ENCODE measurements at regions of chr20 and their contacts with region 1.

Region 1: GRCh38 chr20:25390538-25391528 is at the start of gene ABHD12:
- DNase-seq: peak; percentile 85
- ATAC-seq: peak; percentile 93
- H3K4me3 Mint-ChIP-seq: peak within 1 kb of the TSS; percentile 85
- H3K27ac Mint-ChIP-seq: peak within 1 kb of the TSS; percentile 76
- H3K4me1 Mint-ChIP-seq: peaks cover 17% of the 10 kb centered on the region
- H3K27me3 Mint-ChIP-seq: no peaks in the 10 kb centered on the region
- CTCF ChIP-seq: no peak
- total RNA-seq, gene ABHD12: 16.1 and 16.3 TPM in 2 replicates

Region 2: DNA sequence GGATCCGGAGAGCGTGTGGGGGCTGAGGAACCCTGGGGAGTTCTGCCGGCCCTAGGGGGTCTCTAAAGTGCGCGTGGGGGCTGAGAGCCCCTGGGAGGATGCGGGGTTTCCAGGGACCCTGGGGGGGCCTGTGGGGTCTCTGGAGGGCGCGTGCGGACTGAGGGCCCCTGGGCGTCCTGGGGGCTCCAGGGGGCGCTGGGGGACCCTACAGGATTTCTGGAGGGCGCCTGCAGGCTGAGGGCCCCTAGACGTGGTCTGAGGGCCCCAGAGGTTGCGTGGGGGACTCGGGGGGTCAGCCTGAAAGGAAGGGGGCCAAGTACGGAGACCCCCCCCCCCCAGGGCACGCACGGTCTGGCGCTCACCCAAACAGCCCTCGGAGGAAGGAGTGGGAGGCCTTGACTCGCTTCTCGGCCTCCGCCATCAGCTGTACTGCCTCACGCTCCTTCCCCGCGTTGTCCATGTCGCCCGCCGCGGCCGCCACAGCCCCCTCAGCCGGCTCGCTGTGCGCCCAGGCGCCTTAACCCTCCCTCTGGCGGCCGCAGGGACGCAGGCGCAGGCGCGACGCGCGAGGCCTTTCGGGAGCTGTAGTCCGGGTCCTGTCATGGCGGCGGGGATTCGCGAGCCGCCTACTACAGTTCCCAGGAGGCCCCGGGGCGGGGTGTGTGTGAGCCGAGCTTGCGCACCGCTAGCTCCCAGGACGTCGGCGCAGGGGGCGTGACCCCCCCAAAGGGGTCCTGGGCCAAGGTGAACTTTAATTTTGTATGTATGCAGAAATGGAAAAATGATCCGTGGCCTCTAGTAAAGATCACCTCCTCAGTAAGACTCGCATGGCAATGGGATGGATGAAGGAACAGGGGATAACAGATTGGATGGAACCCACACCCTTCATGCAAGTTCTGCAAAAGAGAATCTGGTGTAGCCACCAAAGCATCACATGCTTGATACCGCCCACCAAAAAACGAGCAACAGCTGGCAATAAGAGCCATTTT is 1969.6 kb before region 1 on chr20 and contains the start of gene NAPB:
- CTCF ChIA-PET with region 1: no interaction called
- POLR2A ChIA-PET with region 1: no interaction called
- intact Hi-C with region 1: loop called (anchors 5 kb)
- DNase-seq: peak; percentile 92
- ATAC-seq: peak; percentile 99
- H3K4me3 Mint-ChIP-seq: peak within 1 kb of the TSS; percentile 82
- H3K27ac Mint-ChIP-seq: peak within 1 kb of the TSS; percentile 50
- H3K4me1 Mint-ChIP-seq: peaks cover 17% of the 10 kb centered on the region
- H3K27me3 Mint-ChIP-seq: peaks cover 13% of the 10 kb centered on the region
- CTCF ChIP-seq: no peak
- total RNA-seq, gene NAPB: 5.3 and 7.8 TPM in 2 replicates

Region 3: GRCh38 chr20:24910461-24910860 is 480.4 kb before region 1 on chr20:
- CTCF ChIA-PET with region 1: no interaction called
- POLR2A ChIA-PET with region 1: no interaction called
- intact Hi-C with region 1: no loop called
- DNase-seq: no peak
- ATAC-seq: no peak
- H3K4me3 Mint-ChIP-seq: no peak overlapping the region
- H3K27ac Mint-ChIP-seq: no peak overlapping the region
- H3K4me1 Mint-ChIP-seq: no peaks in the 10 kb centered on the region
- H3K27me3 Mint-ChIP-seq: no peaks in the 10 kb centered on the region
- CTCF ChIP-seq: no peak

Region 4: DNA sequence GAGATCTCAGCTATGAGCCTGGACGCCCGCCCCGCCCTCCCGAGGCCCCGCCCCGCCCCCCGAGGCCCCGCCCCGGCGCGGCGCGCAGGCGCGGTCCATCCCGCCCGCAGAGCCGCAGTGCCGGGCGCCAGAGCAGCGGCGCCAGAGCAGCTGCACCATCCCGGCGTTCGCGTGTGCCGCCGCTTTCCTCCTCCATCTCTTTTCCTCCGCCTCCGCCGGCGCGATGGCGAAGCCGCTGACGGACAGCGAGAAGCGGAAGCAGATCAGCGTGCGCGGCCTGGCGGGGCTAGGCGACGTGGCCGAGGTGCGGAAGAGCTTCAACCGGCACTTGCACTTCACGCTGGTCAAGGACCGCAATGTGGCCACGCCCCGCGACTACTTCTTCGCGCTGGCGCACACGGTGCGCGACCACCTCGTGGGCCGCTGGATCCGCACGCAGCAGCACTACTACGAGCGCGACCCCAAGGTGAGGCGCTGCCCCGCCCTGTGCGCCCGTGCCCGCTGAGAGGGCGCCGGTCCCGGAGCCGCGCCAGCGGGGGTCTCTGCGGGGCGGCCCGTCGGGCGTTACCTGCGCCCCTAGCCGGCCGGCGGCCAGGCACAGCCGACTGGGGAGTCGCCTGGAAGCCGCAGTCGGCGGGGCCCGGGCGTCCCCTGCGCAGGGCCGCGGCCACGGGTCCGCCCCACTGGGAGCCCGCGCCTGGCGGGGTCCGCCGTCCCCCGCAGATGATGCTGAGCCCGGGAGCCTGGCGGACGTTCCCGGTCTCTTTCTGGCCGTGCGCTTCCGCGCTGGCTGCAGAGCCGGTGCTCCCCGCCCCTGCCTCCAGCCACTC is 142.7 kb before region 1 on chr20 and contains the start of gene PYGB:
- CTCF ChIA-PET with region 1: no interaction called
- POLR2A ChIA-PET with region 1: interaction called, 11 read pairs
- intact Hi-C with region 1: loop called (anchors 1 kb)
- DNase-seq: peak; percentile 77
- ATAC-seq: peak; percentile 87
- H3K4me3 Mint-ChIP-seq: peak within 1 kb of the TSS; percentile 94
- H3K27ac Mint-ChIP-seq: peak within 1 kb of the TSS; percentile 86
- H3K4me1 Mint-ChIP-seq: peaks cover 25% of the 10 kb centered on the region
- H3K27me3 Mint-ChIP-seq: peaks cover 10% of the 10 kb centered on the region
- CTCF ChIP-seq: no peak
- total RNA-seq, gene PYGB: 21.5 and 23.5 TPM in 2 replicates

Region 5: GRCh38 chr20:25259788-25260254 is 131.0 kb before region 1 on chr20:
- CTCF ChIA-PET with region 1: no interaction called
- POLR2A ChIA-PET with region 1: no interaction called
- intact Hi-C with region 1: no loop called
- DNase-seq: no peak
- ATAC-seq: no peak
- H3K4me3 Mint-ChIP-seq: no peak overlapping the region
- H3K27ac Mint-ChIP-seq: no peak overlapping the region
- H3K4me1 Mint-ChIP-seq: no peaks in the 10 kb centered on the region
- H3K27me3 Mint-ChIP-seq: no peaks in the 10 kb centered on the region
- CTCF ChIP-seq: no peak

Region 6: DNA sequence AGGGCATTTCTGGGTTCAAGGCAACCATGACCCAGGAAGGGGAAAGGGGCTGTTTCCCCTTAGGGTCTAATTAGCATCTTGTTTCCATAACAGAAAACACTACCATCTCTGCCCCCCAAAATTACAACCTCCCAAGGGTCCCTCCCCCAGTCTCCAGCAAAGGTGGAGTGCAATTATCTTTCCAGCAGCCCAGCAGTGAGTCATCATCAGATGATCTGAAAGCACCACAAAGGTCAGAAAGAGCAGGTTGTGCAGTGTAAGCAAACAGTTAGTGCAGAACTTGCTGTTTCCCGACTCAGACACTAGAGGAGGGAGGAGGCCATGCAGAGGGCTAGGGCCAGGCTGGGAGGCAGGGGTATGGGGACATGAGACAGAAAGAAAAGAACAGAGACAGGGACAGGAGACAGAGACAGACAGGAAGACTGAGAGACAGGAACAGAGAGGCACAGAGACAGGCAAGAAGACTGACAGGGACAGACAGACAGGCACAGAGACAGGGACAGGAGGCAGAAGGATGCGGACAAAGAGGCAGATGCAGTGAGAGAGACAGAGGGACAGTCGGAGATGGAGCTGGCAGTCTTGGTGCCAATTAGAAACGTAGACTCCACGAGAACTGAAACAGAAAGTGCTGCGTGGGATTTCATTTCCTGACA is 80.4 kb before region 1 on chr20:
- CTCF ChIA-PET with region 1: no interaction called
- POLR2A ChIA-PET with region 1: interaction called, 4 read pairs
- intact Hi-C with region 1: loop called (anchors 1 kb)
- DNase-seq: no peak
- ATAC-seq: peak; percentile 94
- H3K4me3 Mint-ChIP-seq: peak overlapping the region; percentile 16
- H3K27ac Mint-ChIP-seq: peak overlapping the region; percentile 57
- H3K4me1 Mint-ChIP-seq: peaks cover 33% of the 10 kb centered on the region
- H3K27me3 Mint-ChIP-seq: no peaks in the 10 kb centered on the region
- CTCF ChIP-seq: no peak

Region 7: GRCh38 chr20:25407311-25408169 is 16.7 kb after region 1 on chr20 and contains the start of gene GINS1:
- CTCF ChIA-PET with region 1: no interaction called
- POLR2A ChIA-PET with region 1: interaction called, 13 read pairs
- intact Hi-C with region 1: loop called (anchors 1 kb)
- DNase-seq: peak; percentile 70
- ATAC-seq: peak; percentile 93
- H3K4me3 Mint-ChIP-seq: peak within 1 kb of the TSS; percentile 91
- H3K27ac Mint-ChIP-seq: peak within 1 kb of the TSS; percentile 76
- H3K4me1 Mint-ChIP-seq: peaks cover 17% of the 10 kb centered on the region
- H3K27me3 Mint-ChIP-seq: no peaks in the 10 kb centered on the region
- CTCF ChIP-seq: no peak
- total RNA-seq, gene GINS1: 2.9 and 5.4 TPM in 2 replicates

Region 8: GRCh38 chr20:25592135-25592852 is 201.5 kb after region 1 on chr20:
- CTCF ChIA-PET with region 1: no interaction called
- POLR2A ChIA-PET with region 1: no interaction called
- intact Hi-C with region 1: no loop called
- DNase-seq: no peak
- ATAC-seq: no peak
- H3K4me3 Mint-ChIP-seq: no peak overlapping the region
- H3K27ac Mint-ChIP-seq: no peak overlapping the region
- H3K4me1 Mint-ChIP-seq: no peaks in the 10 kb centered on the region
- H3K27me3 Mint-ChIP-seq: no peaks in the 10 kb centered on the region
- CTCF ChIP-seq: no peak

Region 9: GRCh38 chr20:25705830-25706351 is 315.1 kb after region 1 on chr20:
- CTCF ChIA-PET with region 1: no interaction called
- POLR2A ChIA-PET with region 1: no interaction called
- intact Hi-C with region 1: no loop called
- DNase-seq: no peak
- ATAC-seq: no peak
- H3K4me3 Mint-ChIP-seq: no peak overlapping the region
- H3K27ac Mint-ChIP-seq: no peak overlapping the region
- H3K4me1 Mint-ChIP-seq: peaks cover 21% of the 10 kb centered on the region
- H3K27me3 Mint-ChIP-seq: no peaks in the 10 kb centered on the region
- CTCF ChIP-seq: no peak

Measured in activated B cell treated with CpG ODN at 0.5 μM for 24 hours (primary cell).